GM13977 (cell line): ENCODE measurements at regions of chr19 and their contacts with region 1.

Region 1: DNA sequence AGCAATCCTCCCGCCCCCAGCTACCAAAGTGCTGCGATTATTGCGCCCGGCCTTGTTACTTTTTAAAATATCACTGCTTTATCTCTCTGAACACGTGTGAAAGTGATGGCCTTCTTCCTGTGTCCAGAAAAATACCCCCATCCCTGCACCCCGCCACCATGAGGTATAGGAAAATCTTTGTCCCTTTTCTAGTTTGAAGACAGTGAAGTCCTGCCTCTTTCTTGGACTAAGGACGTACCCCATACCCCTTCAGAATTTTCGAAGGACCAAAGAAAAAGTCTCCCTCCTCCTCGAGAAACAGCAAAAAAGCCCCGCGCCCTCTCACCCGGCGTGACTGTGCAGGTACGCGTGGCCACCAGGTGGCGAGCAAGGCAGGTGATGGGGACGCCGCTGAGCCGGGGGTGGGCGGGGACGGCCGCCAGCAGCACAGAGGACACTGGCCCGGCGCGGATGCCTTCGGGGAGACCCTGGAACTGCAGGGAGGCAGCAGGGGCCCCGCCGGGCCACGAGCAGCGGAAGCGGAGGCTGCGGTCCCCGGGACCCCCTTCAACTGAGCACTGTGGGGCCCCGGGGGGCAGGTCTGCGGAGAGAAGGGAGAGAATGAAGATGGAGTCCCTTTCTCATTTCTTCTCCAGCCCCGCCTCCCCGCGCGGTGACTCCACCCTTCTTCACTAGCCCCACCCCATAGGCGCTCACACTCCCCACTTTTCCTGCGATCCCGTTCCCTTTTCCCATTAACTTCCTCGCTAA is 3.2 kb downstream of the VSIG10L start:
- DNase-seq: peak; percentile 94
- CTCF ChIP-seq: peak; percentile 92

Region 2: DNA sequence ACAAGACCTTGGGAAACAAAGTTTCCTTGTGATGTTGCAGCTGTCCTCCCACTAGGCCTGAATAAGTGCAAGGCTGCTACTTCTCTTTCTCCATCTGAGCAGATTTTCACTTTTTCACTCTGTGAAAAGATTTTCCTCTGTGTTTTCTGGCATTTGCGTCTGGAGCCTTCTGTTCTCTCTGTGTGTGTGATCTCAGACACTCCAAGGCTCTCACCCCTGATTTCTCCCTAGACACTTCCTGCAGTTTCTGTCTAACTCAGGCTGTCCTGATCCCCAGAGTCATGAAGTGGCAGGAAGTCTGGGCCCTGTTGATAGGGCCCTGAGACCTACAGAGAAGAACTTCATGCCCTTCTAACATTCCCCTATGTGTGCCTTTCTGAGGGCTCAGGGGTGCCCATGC is 159.5 kb before region 1 on chr19:
- in situ Hi-C with region 1: no loop called
- DNase-seq: no peak
- CTCF ChIP-seq: no peak

Region 3: DNA sequence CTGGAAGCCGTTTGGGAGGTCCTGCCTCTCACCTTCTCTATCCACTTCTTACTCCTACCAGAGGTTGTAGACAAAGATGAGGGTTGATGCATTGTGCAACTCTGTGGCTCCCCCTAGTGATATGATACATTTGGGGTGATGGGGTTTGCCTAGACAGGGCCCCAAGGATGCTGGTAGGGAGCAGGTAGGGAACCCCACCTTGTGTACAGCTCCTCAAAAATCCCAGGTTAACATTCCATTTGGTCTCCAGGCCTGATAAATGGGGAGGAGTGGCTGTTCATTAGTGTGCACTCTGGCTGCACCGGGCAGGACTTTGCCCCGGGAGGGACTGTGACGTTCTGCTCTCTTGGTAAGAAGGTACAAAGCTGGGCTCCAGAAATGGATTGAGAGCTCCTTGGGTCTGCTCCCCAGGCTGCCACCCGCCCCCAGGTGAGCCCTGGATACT is 100.3 kb after region 1 on chr19:
- in situ Hi-C with region 1: loop called (anchors 10 kb)
- DNase-seq: peak; percentile 51
- CTCF ChIP-seq: peak; percentile 75